Activated naive CD4-positive, alpha-beta T cell treated with anti-CD3 and anti-CD28 coated beads, Interleukin-2, amount 10 ng/mL, durations not matched to agents 7 days and 5 days (primary cell): ENCODE measurements at regions of chr14 and their contacts with region 1.

Region 1: GRCh38 chr14:60561845-60562746 is 53.1 kb downstream of the SIX6 start:
- DNase-seq: peak; percentile 47
- H3K4me3 Mint-ChIP-seq: no peak overlapping the region
- H3K27ac Mint-ChIP-seq: no peak overlapping the region
- H3K4me1 Mint-ChIP-seq: no peaks in the 10 kb centered on the region
- H3K27me3 Mint-ChIP-seq: peaks cover 12% of the 10 kb centered on the region

Region 2: DNA sequence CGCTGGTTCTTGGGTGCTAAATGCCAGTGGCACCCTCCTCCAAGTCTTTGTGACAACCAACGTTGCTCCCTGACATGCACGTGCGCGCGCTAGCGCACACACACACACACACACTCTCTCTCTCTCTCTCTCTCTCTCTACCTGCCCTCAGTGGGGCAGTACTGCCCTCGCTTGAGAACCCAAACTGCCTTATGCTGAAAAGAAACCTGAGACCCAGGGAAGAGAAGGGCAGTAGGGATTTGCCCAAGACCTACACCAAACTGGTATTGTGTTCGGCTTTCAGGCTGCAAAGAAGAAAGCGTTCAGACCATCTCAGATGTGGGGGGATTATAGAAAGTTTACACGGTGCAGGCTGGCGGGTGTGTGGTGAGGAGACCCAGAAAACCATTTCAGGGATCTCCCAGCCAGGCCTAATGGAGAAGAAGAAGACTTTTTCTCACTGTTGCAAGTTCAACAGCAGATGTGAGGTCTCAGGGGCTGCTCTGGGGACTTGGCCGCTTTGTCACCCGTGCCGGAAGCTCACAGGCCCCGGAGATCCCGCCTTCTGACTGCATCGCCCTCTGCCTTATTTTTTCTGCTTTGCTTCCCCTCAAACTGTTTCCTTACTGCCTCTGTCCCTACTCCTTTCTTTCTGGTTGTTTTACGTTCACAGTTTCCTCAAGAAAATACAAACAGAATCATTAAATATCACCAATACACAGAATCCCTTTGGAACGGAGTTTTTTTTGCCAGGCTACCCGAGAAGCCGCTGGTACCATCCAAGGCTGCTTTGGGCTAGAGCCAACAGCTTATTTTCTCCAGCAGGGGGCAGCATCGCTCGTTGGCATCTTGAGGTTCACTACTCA is 230.7 kb before region 1 on chr14:
- CTCF ChIA-PET with region 1: interaction called, 19 read pairs
- DNase-seq: peak; percentile 82
- H3K4me3 Mint-ChIP-seq: peak overlapping the region; percentile 82
- H3K27ac Mint-ChIP-seq: peak overlapping the region; percentile 93
- H3K4me1 Mint-ChIP-seq: peaks cover 49% of the 10 kb centered on the region
- H3K27me3 Mint-ChIP-seq: peaks cover 41% of the 10 kb centered on the region

Region 3: GRCh38 chr14:60349663-60350365 is 212.3 kb before region 1 on chr14:
- CTCF ChIA-PET with region 1: interaction called, 10 read pairs
- DNase-seq: peak; percentile 40
- H3K4me3 Mint-ChIP-seq: no peak overlapping the region
- H3K27ac Mint-ChIP-seq: no peak overlapping the region
- H3K4me1 Mint-ChIP-seq: no peaks in the 10 kb centered on the region
- H3K27me3 Mint-ChIP-seq: peaks cover 8% of the 10 kb centered on the region

Region 4: DNA sequence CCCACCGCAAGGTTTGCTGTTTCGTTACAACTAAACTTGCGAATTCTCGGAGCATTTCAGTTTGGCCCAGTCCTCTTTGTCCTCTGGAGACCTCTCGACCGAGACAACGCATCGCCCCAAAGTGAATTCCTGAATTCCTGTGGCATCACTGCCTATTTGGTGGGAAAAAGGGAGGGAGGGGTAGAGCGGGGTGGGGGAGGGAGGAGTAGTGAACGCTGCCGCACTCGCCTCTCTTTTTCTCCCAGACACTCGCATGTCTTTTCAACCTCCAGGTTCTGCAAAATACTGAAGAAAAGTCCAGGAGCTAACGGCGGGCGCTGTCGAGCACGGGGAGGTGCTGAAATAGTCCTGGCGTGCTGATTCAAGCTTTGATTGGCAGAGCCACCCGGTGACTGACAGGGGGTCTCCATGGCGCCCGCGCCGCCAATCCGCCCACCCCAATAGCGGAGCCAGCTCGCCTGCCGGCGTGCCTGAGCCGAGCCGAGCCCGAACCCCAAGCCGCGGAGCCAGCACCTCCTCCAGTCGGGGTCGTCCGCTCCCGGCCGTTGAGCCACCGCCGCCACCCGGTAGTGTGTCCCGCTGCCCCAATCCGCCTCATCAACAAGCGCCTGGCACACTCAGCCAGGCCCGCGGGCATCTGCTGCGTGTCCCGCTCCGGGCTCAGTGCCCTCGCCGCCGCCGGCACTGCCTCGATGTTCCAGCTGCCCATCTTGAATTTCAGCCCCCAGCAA is 53.2 kb before region 1 on chr14 and contains the start of gene SIX6:
- CTCF ChIA-PET with region 1: no interaction called
- DNase-seq: no peak
- H3K4me3 Mint-ChIP-seq: peak within 1 kb of the TSS; percentile 12
- H3K27ac Mint-ChIP-seq: peak within 1 kb of the TSS; percentile 14
- H3K4me1 Mint-ChIP-seq: peaks cover 6% of the 10 kb centered on the region
- H3K27me3 Mint-ChIP-seq: peaks cover 84% of the 10 kb centered on the region